ENCODE measurements at regions of chr19 and their contacts with region 1.

Region 1: GRCh38 chr19:44723952-44724319 is 24.6 kb upstream of the BCL3 start:
- DNase-seq: no peak
- H3K4me3 ChIP-seq: no peak overlapping the region
- CTCF ChIP-seq: peak; percentile 97

Region 2: DNA sequence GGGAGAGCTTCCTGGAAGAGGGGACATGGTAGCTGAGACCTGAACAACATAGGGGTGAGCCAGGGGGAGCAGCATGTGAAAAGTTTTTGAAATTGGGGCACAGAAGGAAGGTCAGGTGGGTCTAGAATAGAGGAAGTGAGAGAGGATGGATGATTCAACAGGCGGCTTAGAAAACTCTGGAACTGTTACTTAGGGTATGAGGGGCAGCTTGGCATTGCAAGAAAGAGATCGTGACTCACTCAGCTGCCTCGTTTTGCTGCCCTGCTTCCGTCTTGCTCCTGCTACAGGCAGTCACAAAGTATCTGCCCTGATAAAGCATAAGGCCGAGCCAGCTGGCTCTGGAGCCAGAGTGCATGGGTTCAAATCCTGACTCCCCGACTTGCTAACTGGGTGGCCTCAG is 193.2 kb before region 1 on chr19:
- CTCF ChIA-PET with region 1: no interaction called
- POLR2A ChIA-PET with region 1: no interaction called
- DNase-seq: no peak
- H3K4me3 ChIP-seq: no peak overlapping the region
- CTCF ChIP-seq: no peak

Region 3: GRCh38 chr19:44570984-44571684 is 152.8 kb before region 1 on chr19:
- CTCF ChIA-PET with region 1: interaction called, 27 read pairs
- POLR2A ChIA-PET with region 1: no interaction called
- DNase-seq: peak; percentile 34
- H3K4me3 ChIP-seq: no peak overlapping the region
- CTCF ChIP-seq: peak; percentile 54

Region 4: GRCh38 chr19:44689056-44689895 is 34.7 kb before region 1 on chr19:
- CTCF ChIA-PET with region 1: interaction called, 81 read pairs
- POLR2A ChIA-PET with region 1: no interaction called
- DNase-seq: no peak
- H3K4me3 ChIP-seq: no peak overlapping the region
- CTCF ChIP-seq: peak; percentile 96

Region 5: GRCh38 chr19:44741841-44742352 is 18.0 kb after region 1 on chr19:
- CTCF ChIA-PET with region 1: interaction called, 87 read pairs
- POLR2A ChIA-PET with region 1: interaction called, 5 read pairs
- DNase-seq: peak; percentile 98
- H3K4me3 ChIP-seq: no peak overlapping the region
- CTCF ChIP-seq: no peak

Region 6: GRCh38 chr19:44777715-44778347 is 53.9 kb after region 1 on chr19 and contains the start of gene CBLC:
- CTCF ChIA-PET with region 1: interaction called, 694 read pairs
- POLR2A ChIA-PET with region 1: no interaction called
- DNase-seq: no peak
- H3K4me3 ChIP-seq: no peak within 1 kb of the TSS
- CTCF ChIP-seq: no peak

Region 7: DNA sequence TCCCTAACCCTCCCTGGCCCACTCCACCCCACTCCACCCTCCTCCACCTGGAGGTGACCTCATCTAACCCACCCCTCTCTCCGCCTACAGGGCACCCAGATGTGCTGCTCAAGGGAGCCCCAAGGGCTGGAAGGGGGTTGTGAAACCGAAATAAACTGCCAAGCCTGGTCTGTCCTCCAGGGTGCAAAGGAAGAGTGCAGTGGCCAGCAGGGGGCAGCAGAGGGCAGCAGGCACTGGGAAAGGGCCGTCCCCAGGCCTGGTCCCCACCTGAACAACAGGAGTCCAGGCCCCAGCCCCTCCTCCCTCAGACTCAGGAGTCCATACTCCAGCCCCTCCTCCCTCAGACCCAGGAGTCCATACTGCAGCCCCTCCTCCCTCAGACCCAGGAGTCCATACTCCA is 76.5 kb after region 1 on chr19:
- CTCF ChIA-PET with region 1: interaction called, 18 read pairs
- POLR2A ChIA-PET with region 1: no interaction called
- DNase-seq: no peak
- H3K4me3 ChIP-seq: no peak overlapping the region
- CTCF ChIP-seq: peak; percentile 100

Region 8: DNA sequence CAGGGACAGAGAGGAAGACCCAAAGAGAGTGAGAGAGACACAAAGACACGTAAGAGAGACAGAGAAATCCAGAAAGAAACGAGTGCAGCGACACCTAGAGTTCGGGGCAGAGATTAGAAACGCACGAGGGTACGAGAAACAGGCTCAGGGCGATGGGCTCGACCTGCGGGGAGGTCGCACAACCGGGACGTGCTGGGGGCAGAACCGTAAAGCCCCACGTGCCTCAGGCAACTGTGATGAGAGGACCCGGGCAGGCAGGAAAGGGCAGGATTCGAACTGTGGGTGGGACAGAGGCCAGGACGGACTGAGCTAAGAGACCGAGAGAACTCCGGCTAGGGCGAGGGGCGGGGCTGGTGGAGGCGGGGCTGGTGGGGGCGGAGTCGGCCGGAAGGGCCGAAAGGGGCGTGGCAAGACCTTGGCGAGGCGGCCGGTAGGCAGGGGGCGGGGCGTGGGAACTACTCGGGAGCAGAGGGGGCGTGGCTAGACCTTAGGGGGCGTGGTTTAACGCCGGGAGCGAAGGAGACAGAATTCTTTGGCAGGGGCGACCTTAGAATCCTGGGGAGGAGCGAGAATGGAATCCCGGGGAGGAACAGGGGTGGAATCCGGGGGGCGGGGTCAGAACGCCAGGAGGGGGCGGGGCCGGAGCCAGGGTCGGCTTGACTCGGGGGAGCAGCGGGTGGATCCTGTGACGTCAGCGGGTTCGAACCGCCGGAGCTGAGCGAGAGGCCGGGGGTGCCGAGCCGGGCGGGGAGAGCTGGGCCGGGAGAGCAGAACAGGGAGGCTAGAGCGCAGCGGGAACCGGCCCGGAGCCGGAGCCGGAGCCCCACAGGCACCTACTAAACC is 121.9 kb after region 1 on chr19 and contains the start of gene NECTIN2:
- CTCF ChIA-PET with region 1: interaction called, 75 read pairs
- POLR2A ChIA-PET with region 1: no interaction called
- DNase-seq: peak; percentile 88
- H3K4me3 ChIP-seq: peak within 1 kb of the TSS; percentile 89
- CTCF ChIP-seq: peak; percentile 72

Region 9: GRCh38 chr19:45027371-45027770 is 303.4 kb after region 1 on chr19:
- CTCF ChIA-PET with region 1: no interaction called
- POLR2A ChIA-PET with region 1: no interaction called
- DNase-seq: no peak
- H3K4me3 ChIP-seq: no peak overlapping the region
- CTCF ChIP-seq: no peak

Measured in AG04449 (cell line).